ENCODE measurements at regions of chr9 and their contacts with region 1.

Region 1: DNA sequence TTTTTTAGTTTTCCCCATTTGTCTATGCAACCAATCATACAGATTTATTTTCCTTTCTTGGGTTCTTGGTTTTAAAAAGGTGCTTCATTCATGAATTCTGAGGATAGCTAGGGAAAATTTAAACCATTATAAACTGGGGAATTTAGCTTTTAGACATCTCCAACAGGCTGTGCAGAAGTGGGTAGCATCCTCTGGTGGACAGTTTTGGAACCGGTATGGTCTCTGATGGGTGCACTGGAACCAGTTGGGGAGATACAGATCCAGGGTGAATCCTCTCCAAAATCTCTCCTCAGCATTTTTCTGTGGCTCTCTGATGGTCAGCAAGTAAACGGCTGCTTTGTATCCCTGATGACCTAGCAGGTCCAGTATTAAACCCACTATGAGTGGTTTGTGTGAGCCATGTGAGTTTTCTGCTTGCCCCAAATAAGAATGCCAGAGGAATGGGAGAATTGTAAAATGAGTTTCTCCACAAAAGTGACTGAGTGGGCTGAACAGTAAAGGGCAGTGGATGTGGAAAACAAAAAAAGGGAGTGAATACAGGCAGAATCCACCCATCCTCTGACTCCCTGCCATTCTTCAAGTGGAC is 9.1 kb upstream of the DNAJC25 start:
- DNase-seq: no peak
- H3K4me3 ChIP-seq: no peak overlapping the region
- H3K27me3 ChIP-seq: no peaks in the 10 kb centered on the region
- CTCF ChIP-seq: peak; percentile 87

Region 2: DNA sequence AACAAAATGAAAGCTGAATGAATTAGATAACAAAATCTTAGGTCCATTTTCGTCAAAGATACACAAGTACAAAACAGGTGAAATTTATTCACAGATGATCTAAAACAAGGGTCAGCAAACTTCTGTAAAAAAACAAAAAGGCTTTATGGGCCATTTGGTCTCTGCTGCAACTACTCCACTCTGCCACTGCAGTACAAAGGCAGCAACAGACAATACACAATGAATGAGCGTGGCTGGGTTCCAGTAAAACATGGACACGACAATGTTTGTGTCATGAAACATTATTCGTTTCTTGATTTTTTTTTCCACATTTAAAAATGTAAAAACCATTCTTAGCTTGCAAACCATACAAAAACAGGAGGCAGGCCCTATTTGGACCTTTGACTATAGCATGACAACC is 209.7 kb before region 1 on chr9:
- CTCF ChIA-PET with region 1: no interaction called
- POLR2A ChIA-PET with region 1: no interaction called
- DNase-seq: no peak
- H3K4me3 ChIP-seq: no peak overlapping the region
- H3K27me3 ChIP-seq: no peaks in the 10 kb centered on the region
- CTCF ChIP-seq: no peak

Region 3: GRCh38 chr9:111542497-111543254 is 79.3 kb before region 1 on chr9:
- CTCF ChIA-PET with region 1: no interaction called
- POLR2A ChIA-PET with region 1: no interaction called
- DNase-seq: no peak
- H3K4me3 ChIP-seq: no peak overlapping the region
- H3K27me3 ChIP-seq: no peaks in the 10 kb centered on the region
- CTCF ChIP-seq: no peak

Region 4: DNA sequence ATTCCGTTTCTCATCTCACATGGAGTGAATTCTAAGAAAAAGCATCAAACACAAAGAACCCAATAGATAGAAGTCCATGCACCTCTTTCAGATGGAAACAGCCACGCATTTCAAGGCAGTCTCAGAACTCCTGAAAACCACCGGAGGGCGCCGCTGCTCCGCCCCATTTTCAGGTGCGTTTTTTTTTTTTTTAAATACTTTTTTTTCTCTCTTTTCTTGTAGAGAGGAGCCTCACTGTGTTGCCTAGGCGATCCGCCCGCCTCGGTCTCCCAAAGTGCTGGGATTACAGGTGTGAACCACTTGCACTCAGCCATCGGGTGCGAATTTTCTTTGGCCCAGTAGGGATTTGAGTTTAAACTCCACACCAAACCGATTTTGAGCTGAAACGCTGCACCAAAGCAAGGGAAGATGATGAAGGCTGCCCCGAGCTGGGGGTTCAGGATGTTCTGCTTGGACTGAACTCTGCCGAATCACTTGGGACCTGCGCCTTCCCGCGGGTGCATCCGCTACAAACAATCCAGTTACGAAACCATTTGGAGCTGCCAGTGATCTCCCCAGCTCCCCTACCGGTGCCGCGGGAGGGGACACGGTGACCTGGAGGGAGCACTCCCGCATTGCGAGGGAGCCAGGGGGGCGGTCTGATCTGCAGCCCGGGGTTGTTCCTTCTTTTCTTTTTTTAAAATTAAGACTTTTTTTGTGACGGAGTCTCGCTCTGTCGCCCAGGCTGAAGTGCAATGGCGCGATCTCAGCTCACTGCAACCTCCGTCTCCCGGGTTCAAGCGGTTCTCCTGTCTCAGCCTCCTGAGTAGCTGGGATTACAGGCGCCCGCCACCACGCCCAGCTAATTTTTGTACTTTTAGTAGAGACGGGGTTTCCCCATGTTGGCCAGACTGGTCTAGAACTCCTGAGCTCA is 23.9 kb before region 1 on chr9:
- CTCF ChIA-PET with region 1: interaction called, 18 read pairs
- POLR2A ChIA-PET with region 1: no interaction called
- DNase-seq: peak; percentile 19
- H3K4me3 ChIP-seq: peak overlapping the region; percentile 71
- H3K27me3 ChIP-seq: no peaks in the 10 kb centered on the region
- CTCF ChIP-seq: peak; percentile 75

Region 5: GRCh38 chr9:111605041-111605559 is 16.9 kb before region 1 on chr9:
- CTCF ChIA-PET with region 1: interaction called, 13 read pairs
- POLR2A ChIA-PET with region 1: no interaction called
- DNase-seq: no peak
- H3K4me3 ChIP-seq: no peak overlapping the region
- H3K27me3 ChIP-seq: peaks cover 2% of the 10 kb centered on the region; the same call in 1 of the 2 replicates
- CTCF ChIP-seq: no peak

Region 6: GRCh38 chr9:112080831-112081542 is 459.0 kb after region 1 on chr9:
- CTCF ChIA-PET with region 1: no interaction called
- POLR2A ChIA-PET with region 1: no interaction called
- DNase-seq: no peak
- H3K4me3 ChIP-seq: no peak overlapping the region
- H3K27me3 ChIP-seq: no peaks in the 10 kb centered on the region
- CTCF ChIP-seq: no peak

Measured in BJ (cell line).